ENCODE measurements at regions of chr17 and their contacts with region 1.

Region 1: GRCh38 chr17:33674685-33675084 is 381.6 kb upstream of the ASIC2 start:
- DNase-seq: peak; percentile 76
- ATAC-seq: peak; percentile 85
- H3K4me3 Mint-ChIP-seq: no peak overlapping the region
- H3K27ac Mint-ChIP-seq: no peak overlapping the region
- H3K4me1 Mint-ChIP-seq: peaks cover 3% of the 10 kb centered on the region
- H3K27me3 Mint-ChIP-seq: peaks cover 2% of the 10 kb centered on the region

Region 2: GRCh38 chr17:33038740-33039139 is 635.9 kb before region 1 on chr17:
- CTCF ChIA-PET with region 1: no interaction called
- POLR2A ChIA-PET with region 1: no interaction called
- intact Hi-C with region 1: loop called in 1 of 2 experiments (anchors 10 kb)
- DNase-seq: peak; percentile 54
- ATAC-seq: peak; percentile 55
- H3K4me3 Mint-ChIP-seq: no peak overlapping the region
- H3K27ac Mint-ChIP-seq: no peak overlapping the region
- H3K4me1 Mint-ChIP-seq: no peaks in the 10 kb centered on the region
- H3K27me3 Mint-ChIP-seq: peaks cover 33% of the 10 kb centered on the region

Region 3: GRCh38 chr17:33520426-33521330 is 154.0 kb before region 1 on chr17:
- CTCF ChIA-PET with region 1: interaction called, 6 read pairs
- POLR2A ChIA-PET with region 1: no interaction called
- intact Hi-C with region 1: loop called (anchors 1 to 10 kb)
- DNase-seq: peak; percentile 76
- ATAC-seq: peak; percentile 55
- H3K4me3 Mint-ChIP-seq: no peak overlapping the region
- H3K27ac Mint-ChIP-seq: no peak overlapping the region
- H3K4me1 Mint-ChIP-seq: no peaks in the 10 kb centered on the region
- H3K27me3 Mint-ChIP-seq: no peaks in the 10 kb centered on the region

Region 4: DNA sequence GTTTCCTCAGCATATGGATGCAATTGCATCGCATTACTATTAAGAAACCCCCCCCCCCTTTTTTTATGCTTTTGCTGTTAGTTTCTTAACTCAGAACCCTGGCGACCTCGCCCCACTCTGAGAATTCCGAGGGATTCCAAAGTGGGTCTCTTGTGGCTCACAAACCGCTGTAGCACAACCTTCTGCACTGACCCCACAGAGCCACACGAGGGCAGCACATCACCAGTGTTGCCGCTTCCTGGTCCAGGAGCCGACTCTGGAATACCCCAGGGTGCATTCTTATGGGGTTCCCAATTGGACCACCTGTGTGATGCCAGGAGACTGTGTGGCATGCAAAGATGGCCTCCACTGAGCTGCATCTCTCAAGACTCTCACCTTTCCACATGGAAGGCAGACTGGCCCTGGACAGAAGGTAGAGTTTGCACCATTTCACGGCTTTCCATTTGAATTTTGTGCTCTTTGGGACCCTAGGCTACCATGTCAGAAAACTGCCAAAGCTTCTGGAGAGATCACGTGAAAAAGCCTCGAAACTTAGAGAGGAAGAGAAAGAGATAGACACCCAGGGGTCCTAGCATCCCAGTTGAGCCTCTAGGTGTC is 51.1 kb after region 1 on chr17:
- CTCF ChIA-PET with region 1: no interaction called
- POLR2A ChIA-PET with region 1: no interaction called
- intact Hi-C with region 1: loop called in 1 of 2 experiments (anchors 5 kb)
- DNase-seq: peak; percentile 53
- ATAC-seq: no peak
- H3K4me3 Mint-ChIP-seq: no peak overlapping the region
- H3K27ac Mint-ChIP-seq: no peak overlapping the region
- H3K4me1 Mint-ChIP-seq: no peaks in the 10 kb centered on the region
- H3K27me3 Mint-ChIP-seq: peaks cover 12% of the 10 kb centered on the region

Region 5: DNA sequence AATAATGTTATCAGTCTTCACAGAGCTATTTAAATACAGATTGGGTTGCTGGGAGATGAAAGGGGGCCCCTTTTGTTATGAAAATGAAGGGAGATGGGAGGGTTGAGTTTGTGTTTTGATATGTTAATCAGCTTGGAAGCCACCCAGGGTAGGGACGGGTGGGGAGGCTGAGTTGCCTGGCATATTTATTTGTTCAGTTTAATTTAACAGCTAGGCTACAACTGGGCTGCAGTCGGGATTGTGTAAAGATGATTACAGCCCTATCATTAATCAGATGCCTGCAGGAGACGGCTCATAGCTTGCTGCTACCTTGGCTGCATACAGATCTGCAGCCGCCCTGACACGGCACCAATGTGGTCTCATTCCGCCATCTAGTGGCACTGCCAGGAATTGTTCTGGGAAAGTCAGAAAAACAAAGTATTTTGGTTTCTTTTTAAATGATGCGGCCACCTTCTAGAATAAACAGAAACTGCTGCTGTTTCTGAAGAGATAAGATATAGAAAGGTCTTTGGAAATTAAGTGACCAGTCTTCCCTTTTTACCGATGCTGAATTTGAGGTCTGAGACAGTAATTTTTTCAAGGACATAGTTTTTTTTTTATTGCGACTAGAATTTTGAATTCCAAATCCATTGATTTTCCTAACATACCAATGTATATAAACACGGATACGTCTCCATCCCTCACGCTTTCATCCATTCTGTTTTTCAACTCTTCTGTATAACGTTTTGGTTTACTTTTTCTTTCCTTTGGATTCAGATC is 76.4 kb after region 1 on chr17:
- CTCF ChIA-PET with region 1: interaction called, 4 read pairs
- POLR2A ChIA-PET with region 1: no interaction called
- intact Hi-C with region 1: loop called in 1 of 2 experiments (anchors 2 kb)
- DNase-seq: peak; percentile 80
- ATAC-seq: peak; percentile 47
- H3K4me3 Mint-ChIP-seq: no peak overlapping the region
- H3K27ac Mint-ChIP-seq: no peak overlapping the region
- H3K4me1 Mint-ChIP-seq: peaks cover 5% of the 10 kb centered on the region
- H3K27me3 Mint-ChIP-seq: peaks cover 35% of the 10 kb centered on the region